ENCODE measurements at regions of chr7 and their contacts with region 1.

Region 1: GRCh38 chr7:128874140-128875031 is 11.7 kb downstream of the ATP6V1F start:
- DNase-seq: no peak
- H3K4me3 ChIP-seq: no peak overlapping the region
- H3K27ac ChIP-seq: no peak overlapping the region
- H3K4me1 ChIP-seq: peaks cover 0 to 12% (median 10%) of the 10 kb centered on the region in 4 experiments
- H3K27me3 ChIP-seq: peaks cover 0 to 13% (median 2%) of the 10 kb centered on the region in 5 experiments

Region 2: DNA sequence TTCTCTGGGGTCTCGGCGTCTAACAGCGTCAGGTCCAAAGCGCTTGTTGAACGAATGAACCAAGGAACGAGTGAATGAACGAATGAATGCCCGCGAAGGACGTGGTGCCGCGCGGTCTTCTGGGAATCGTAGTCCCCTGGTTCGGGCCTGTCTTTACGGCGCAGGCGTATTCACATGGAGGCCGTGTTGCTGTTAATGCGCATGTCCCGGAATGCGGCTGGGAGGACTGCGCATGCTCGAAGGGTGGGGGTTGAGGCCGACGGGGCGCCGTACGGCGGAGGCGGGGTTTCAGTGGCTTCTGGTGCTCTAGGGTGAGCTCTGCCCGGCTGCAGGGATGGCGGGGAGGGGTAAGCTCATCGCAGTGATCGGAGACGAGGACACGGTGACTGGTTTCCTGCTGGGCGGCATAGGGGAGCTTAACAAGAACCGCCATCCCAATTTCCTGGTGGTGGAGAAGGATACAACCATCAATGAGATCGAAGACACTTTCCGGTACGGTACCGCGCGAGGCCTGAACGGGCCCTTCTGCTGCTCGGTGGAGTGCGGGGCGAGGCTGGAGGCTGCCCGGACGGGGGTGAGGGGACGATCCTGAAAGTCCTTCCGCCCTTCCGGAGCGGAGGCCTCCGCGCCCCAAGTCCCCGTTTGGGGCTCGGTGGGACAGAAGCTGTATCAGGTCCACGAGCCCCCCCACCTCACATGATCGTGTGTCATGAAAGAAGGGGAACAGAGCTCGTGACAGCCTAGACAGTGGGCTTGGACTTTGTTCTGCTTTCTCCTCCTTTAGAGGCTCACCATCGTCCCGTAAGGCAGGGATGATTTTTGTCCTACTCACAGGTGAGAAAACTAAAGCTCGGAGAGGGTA is 11.6 kb before region 1 on chr7 and contains the start of gene ATP6V1F:
- CTCF ChIA-PET with region 1: interaction called, 123 read pairs
- POLR2A ChIA-PET with region 1: no interaction called
- DNase-seq: peak; percentile 96 to 98 (median 97)
- H3K4me3 ChIP-seq: peak within 1 kb of the TSS; percentile 61 to 95 (median 93)
- H3K27ac ChIP-seq: peak within 1 kb of the TSS; percentile 85 to 92
- H3K4me1 ChIP-seq: peaks cover 3 to 39% (median 36%) of the 10 kb centered on the region in 4 experiments
- H3K27me3 ChIP-seq: no peaks in the 10 kb centered on the region

Measured in common myeloid progenitor, CD34-positive (primary cell).